ENCODE measurements at regions of chr16 and their contacts with region 1.

Region 1: GRCh38 chr16:68328151-68328859 is 17.5 kb downstream of the PRMT7 start:
- DNase-seq: peak; percentile 77 to 83 (median 78)
- H3K4me3 ChIP-seq: no peak overlapping the region
- H3K4me3 Mint-ChIP-seq: no peak overlapping the region
- H3K27ac ChIP-seq: no peak overlapping the region
- H3K27ac Mint-ChIP-seq: peak overlapping the region; percentile 5 to 88 (median 19)
- H3K4me1 ChIP-seq: peaks cover 16% of the 10 kb centered on the region
- H3K4me1 Mint-ChIP-seq: peaks cover 8 to 19% (median 14%) of the 10 kb centered on the region in 4 donors
- H3K27me3 ChIP-seq: no peaks in the 10 kb centered on the region
- H3K27me3 Mint-ChIP-seq: no peaks in the 10 kb centered on the region

Region 2: GRCh38 chr16:66629856-66630255 is 1698.4 kb before region 1 on chr16:
- CTCF ChIA-PET with region 1: no interaction called
- POLR2A ChIA-PET with region 1: no interaction called
- intact Hi-C with region 1: no loop called
- DNase-seq: no peak
- H3K4me3 ChIP-seq: no peak overlapping the region
- H3K4me3 Mint-ChIP-seq: no peak overlapping the region
- H3K27ac ChIP-seq: no peak overlapping the region
- H3K27ac Mint-ChIP-seq: no peak overlapping the region
- H3K4me1 ChIP-seq: no peaks in the 10 kb centered on the region
- H3K4me1 Mint-ChIP-seq: no peaks in the 10 kb centered on the region
- H3K27me3 ChIP-seq: no peaks in the 10 kb centered on the region
- H3K27me3 Mint-ChIP-seq: no peaks in the 10 kb centered on the region

Region 3: DNA sequence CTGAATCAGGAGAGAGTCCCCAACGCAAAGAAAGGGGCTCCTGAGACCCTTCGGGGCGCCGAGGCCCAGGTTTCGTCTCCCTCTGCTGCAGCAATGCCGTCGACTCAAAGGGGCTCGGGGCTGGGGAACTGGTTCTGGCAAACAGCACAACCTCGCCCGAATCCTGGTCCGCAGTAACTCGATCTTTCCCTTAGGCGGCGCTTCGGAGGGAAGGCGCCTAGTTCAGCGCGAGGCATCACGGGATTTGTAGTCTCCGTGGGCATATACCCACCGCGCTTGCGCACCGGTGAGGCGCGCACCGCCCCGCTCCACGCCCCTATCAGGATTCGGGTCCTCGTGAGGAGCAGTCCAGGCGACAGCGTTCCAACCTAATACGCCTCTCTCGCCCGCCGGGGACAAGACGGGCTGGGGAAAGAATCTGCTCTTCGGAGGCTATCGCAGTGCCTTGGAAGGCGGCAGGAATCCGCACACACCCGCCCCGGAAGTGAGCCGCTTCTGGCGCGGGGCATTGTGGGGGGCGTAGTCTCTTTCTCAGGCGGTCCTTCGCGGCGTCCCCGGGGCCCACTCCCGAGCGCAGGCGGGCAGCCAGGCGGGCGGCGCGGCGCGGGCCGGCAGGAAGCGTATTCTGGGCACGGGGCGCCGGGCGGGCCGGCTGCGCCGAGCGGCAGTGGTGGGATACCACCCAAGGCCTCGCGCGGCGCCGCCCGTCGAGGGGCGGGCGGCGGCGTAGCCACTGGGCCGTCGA is 486.4 kb before region 1 on chr16 and contains the start of gene THAP11:
- CTCF ChIA-PET with region 1: no interaction called
- POLR2A ChIA-PET with region 1: no interaction called
- intact Hi-C with region 1: no loop called
- DNase-seq: peak; percentile 94 to 98 (median 95)
- H3K4me3 ChIP-seq: peak within 1 kb of the TSS; percentile 74 to 99
- H3K4me3 Mint-ChIP-seq: peak within 1 kb of the TSS; percentile 93 to 98 (median 96)
- H3K27ac ChIP-seq: peak within 1 kb of the TSS; percentile 98
- H3K27ac Mint-ChIP-seq: peak within 1 kb of the TSS; percentile 97 to 99 (median 98)
- H3K4me1 ChIP-seq: peaks cover 38% of the 10 kb centered on the region
- H3K4me1 Mint-ChIP-seq: peaks cover 25 to 48% (median 36%) of the 10 kb centered on the region in 4 donors
- H3K27me3 ChIP-seq: no peaks in the 10 kb centered on the region
- H3K27me3 Mint-ChIP-seq: no peaks in the 10 kb centered on the region
- total RNA-seq, gene THAP11: 56.8 to 58.4 TPM

Region 4: GRCh38 chr16:68237243-68238028 is 90.9 kb before region 1 on chr16:
- CTCF ChIA-PET with region 1: interaction called, 31 read pairs
- POLR2A ChIA-PET with region 1: interaction called, 5 read pairs
- intact Hi-C with region 1: loop called (anchors 1 kb)
- DNase-seq: peak; percentile 83 to 90 (median 84)
- H3K4me3 ChIP-seq: peak overlapping the region; percentile 42 to 70
- H3K4me3 Mint-ChIP-seq: peak overlapping the region; percentile 88 to 98 (median 95)
- H3K27ac ChIP-seq: peak overlapping the region; percentile 44
- H3K27ac Mint-ChIP-seq: peak overlapping the region; percentile 90 to 97 (median 94)
- H3K4me1 ChIP-seq: peaks cover 30% of the 10 kb centered on the region
- H3K4me1 Mint-ChIP-seq: peaks cover 16 to 52% (median 34%) of the 10 kb centered on the region in 4 donors
- H3K27me3 ChIP-seq: no peaks in the 10 kb centered on the region
- H3K27me3 Mint-ChIP-seq: no peaks in the 10 kb centered on the region

Region 5: GRCh38 chr16:68251832-68252231 is 76.5 kb before region 1 on chr16:
- CTCF ChIA-PET with region 1: interaction called, 575 read pairs
- POLR2A ChIA-PET with region 1: no interaction called
- intact Hi-C with region 1: no loop called
- DNase-seq: no peak
- H3K4me3 ChIP-seq: no peak overlapping the region
- H3K4me3 Mint-ChIP-seq: no peak overlapping the region
- H3K27ac ChIP-seq: no peak overlapping the region
- H3K27ac Mint-ChIP-seq: no peak overlapping the region
- H3K4me1 ChIP-seq: peaks cover 5% of the 10 kb centered on the region
- H3K4me1 Mint-ChIP-seq: peaks cover 0 to 8% (median 2%) of the 10 kb centered on the region in 4 donors
- H3K27me3 ChIP-seq: no peaks in the 10 kb centered on the region
- H3K27me3 Mint-ChIP-seq: no peaks in the 10 kb centered on the region

Region 6: GRCh38 chr16:68275611-68276191 is 52.6 kb before region 1 on chr16:
- CTCF ChIA-PET with region 1: interaction called, 9 read pairs
- POLR2A ChIA-PET with region 1: interaction called, 11 read pairs
- intact Hi-C with region 1: no loop called
- DNase-seq: peak; percentile 72 to 83 (median 76)
- H3K4me3 ChIP-seq: peak overlapping the region in 1 of 2 donors; percentile 24
- H3K4me3 Mint-ChIP-seq: peak overlapping the region; percentile 74 to 86 (median 79)
- H3K27ac ChIP-seq: peak overlapping the region; percentile 50
- H3K27ac Mint-ChIP-seq: peak overlapping the region; percentile 84 to 97 (median 94)
- H3K4me1 ChIP-seq: peaks cover 81% of the 10 kb centered on the region
- H3K4me1 Mint-ChIP-seq: peaks cover 46 to 81% (median 66%) of the 10 kb centered on the region in 4 donors
- H3K27me3 ChIP-seq: no peaks in the 10 kb centered on the region
- H3K27me3 Mint-ChIP-seq: no peaks in the 10 kb centered on the region

Region 7: DNA sequence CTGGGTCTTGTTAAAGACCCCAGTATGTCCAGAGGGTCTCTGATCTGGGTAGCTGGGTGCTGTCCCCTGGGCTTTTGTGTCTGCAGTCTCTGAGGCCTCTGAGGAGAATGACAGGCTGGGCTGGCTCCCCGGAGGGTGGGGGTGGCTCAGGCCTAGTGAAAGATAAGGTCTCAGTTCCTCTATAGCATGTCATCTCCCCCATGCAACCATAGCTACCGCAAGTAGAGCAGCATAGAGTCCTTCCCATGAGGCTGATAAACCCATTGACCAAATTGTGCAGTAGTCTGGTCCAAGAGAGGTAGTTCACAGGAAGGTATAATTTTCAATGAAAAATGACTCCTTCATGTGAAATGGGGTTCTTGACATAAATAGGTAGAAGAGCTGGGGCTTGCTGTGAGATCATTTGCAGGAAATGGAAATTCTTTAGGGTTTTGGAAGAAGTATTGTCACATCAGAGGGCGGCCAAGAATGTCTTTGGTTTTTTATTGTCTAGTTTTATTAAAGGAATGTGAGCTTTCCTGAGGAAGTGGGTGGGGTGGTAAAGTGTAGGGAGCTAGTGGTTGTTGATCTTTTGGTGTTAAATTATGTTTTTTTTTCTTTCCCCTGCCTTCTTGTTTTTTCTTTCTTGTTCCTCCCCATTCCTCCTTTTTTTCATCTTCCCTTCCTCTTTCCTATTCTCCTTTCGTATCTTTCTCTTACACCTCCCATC is 38.5 kb before region 1 on chr16:
- CTCF ChIA-PET with region 1: interaction called, 32 read pairs
- POLR2A ChIA-PET with region 1: interaction called, 5 read pairs
- intact Hi-C with region 1: no loop called
- DNase-seq: peak; percentile 41 to 72 (median 56)
- H3K4me3 ChIP-seq: peak overlapping the region in 1 of 2 donors; percentile 4
- H3K4me3 Mint-ChIP-seq: peak overlapping the region; percentile 32 to 83 (median 66)
- H3K27ac ChIP-seq: peak overlapping the region; percentile 52
- H3K27ac Mint-ChIP-seq: peak overlapping the region; percentile 82 to 91 (median 89)
- H3K4me1 ChIP-seq: peaks cover 83% of the 10 kb centered on the region
- H3K4me1 Mint-ChIP-seq: peaks cover 63 to 92% (median 80%) of the 10 kb centered on the region in 4 donors
- H3K27me3 ChIP-seq: no peaks in the 10 kb centered on the region
- H3K27me3 Mint-ChIP-seq: no peaks in the 10 kb centered on the region

Region 8: GRCh38 chr16:68310761-68311511 is 17.4 kb before region 1 on chr16 and contains the starts of genes PRMT7 and SLC7A6OS:
- CTCF ChIA-PET with region 1: interaction called, 31 read pairs
- POLR2A ChIA-PET with region 1: interaction called, 6 read pairs
- intact Hi-C with region 1: loop called (anchors 1 kb)
- DNase-seq: peak; percentile 90 to 96 (median 92)
- H3K4me3 ChIP-seq: peak within 1 kb of the TSS; percentile 91 to 95
- H3K4me3 Mint-ChIP-seq: peak within 1 kb of the TSS; percentile 96 to 99 (median 98)
- H3K27ac ChIP-seq: peak within 1 kb of the TSS; percentile 77
- H3K27ac Mint-ChIP-seq: peak within 1 kb of the TSS; percentile 75 to 98 (median 96)
- H3K4me1 ChIP-seq: peaks cover 54% of the 10 kb centered on the region
- H3K4me1 Mint-ChIP-seq: peaks cover 27 to 65% (median 46%) of the 10 kb centered on the region in 4 donors
- H3K27me3 ChIP-seq: no peaks in the 10 kb centered on the region
- H3K27me3 Mint-ChIP-seq: no peaks in the 10 kb centered on the region
- total RNA-seq, gene PRMT7: 98.4 to 104 TPM
- total RNA-seq, gene SLC7A6OS: 51.9 to 55.8 TPM

Region 9: DNA sequence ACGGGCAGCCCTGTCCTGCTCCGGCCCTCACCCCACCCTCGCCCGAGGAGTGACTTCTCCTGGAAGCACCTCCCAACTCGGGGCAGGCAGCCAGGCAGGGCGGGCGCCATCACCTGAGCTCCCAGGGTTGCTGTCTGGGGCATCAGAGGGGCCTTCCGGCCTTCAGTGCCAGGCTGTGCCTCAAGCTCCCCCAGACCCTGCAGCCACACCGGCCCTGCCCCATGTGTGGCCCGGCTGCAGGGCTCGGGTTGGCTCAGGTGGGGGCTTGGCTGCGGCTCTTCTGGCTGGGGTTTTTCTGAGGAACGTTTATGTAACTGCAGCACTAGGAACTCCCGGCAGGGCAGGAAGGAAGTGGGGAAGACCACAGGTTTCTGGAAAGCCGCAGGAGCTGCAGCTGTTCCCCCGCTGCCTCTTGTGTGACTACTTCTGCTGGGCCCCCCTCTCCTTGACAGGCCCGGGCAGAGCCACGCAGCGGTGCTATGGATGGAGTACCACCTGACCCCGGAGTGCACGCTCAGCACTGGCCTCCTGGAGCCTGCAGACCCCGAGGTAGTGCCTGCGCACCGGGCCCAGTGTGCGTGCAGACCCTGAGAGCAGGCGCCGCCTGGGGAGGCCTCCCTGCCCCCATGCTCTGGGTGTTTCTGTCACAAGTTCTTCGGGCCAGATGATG is 28.1 kb after region 1 on chr16:
- CTCF ChIA-PET with region 1: interaction called, 14 read pairs
- POLR2A ChIA-PET with region 1: no interaction called
- intact Hi-C with region 1: no loop called
- DNase-seq: peak; percentile 73 to 86 (median 80)
- H3K4me3 ChIP-seq: peak overlapping the region; percentile 23 to 29
- H3K4me3 Mint-ChIP-seq: peak overlapping the region; percentile 65 to 89 (median 80)
- H3K27ac ChIP-seq: no peak overlapping the region
- H3K27ac Mint-ChIP-seq: peak overlapping the region in 6 of 7 donors; percentile 47 to 85 (median 80)
- H3K4me1 ChIP-seq: peaks cover 40% of the 10 kb centered on the region
- H3K4me1 Mint-ChIP-seq: peaks cover 21 to 51% (median 36%) of the 10 kb centered on the region in 4 donors
- H3K27me3 ChIP-seq: no peaks in the 10 kb centered on the region
- H3K27me3 Mint-ChIP-seq: no peaks in the 10 kb centered on the region